ENCODE measurements at regions of chr11 and their contacts with region 1.

Region 1: DNA sequence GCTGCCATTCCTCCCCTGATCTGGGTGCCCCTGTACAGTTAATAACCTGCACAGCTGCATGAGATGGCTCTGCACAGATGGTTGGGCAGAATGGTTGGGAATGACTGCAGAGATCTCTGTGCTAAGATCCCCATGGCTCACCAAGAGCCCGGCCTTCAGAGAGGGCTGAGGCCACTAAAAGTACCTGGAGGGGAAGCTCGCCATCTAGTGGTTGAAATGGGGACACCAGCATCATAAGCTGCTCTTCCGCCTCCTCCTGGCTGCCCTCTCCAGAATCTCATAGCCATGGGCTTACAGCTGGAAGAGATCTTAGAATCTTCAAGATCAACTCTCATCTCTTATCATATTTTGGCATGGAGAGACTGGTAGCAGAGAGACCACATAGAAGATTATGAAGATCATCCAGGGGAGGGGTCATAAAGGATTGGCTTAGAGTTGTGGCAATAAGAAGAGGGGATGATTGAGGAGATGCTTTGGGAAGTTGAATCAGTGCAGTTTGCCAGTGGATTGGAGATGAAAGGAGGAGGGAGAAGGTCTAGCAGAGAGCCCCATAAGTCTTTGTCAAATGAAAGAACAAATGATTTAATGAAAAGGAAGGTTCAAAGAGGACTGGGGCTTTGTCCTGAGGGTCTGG is 22.0 kb upstream of the TLCD5 start:
- DNase-seq: peak; percentile 55
- H3K4me3 ChIP-seq: no peak overlapping the region
- H3K27ac ChIP-seq: no peak overlapping the region
- H3K27me3 ChIP-seq: peaks cover 21% of the 10 kb centered on the region
- CTCF ChIP-seq: peak; percentile 99

Region 2: GRCh38 chr11:120182790-120183491 is 120.2 kb before region 1 on chr11:
- CTCF ChIA-PET with region 1: interaction called, 74 read pairs
- POLR2A ChIA-PET with region 1: no interaction called
- DNase-seq: no peak
- H3K4me3 ChIP-seq: no peak overlapping the region
- H3K27ac ChIP-seq: no peak overlapping the region
- H3K27me3 ChIP-seq: no peaks in the 10 kb centered on the region
- CTCF ChIP-seq: peak; percentile 34

Region 3: DNA sequence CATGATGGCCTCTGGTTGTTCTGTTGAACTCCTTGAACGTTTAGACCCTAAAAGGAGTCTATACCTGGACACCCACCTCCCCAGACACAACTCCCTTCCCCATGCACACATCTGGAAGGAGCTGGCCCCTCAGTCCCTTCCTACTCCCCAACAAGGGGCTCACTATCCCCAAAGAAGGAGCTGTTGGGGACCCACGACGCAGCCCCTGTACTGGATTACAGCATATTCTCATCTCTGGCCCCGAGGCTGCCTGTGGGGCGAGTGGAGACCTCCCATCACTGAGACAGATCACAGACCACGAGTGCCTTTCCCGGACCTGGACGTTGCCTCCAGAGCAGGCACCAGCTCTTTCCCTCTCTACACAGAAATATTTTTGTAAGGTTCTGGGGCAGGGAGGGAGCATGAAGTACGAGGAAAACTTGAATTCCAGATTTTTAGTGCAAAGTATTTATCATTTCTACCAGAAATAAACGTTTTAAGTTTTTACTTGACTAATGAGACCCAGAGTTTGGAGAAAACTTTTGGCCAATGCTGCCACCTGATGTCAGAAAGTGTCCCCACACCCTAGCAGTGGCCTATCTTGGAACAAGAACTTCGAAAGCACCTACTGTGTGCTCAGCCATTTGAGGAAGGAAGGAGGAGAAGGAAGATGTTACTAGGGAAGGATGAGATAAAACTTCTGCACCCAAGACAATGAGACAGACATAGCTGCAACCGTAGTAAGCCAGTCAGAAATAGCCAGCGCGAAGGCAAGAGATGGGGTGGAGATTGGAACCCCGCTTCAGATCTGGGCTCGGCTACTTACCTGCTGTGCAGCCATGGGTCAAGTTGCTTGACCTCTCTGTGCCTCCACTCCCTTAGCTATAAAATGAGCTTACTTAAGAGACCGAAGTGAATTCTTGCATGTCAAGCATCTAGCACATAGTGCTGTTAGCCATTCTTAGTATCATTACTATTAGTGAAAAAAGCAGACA is 73.4 kb before region 1 on chr11:
- CTCF ChIA-PET with region 1: interaction called, 156 read pairs
- POLR2A ChIA-PET with region 1: no interaction called
- DNase-seq: no peak
- H3K4me3 ChIP-seq: no peak overlapping the region
- H3K27ac ChIP-seq: peak overlapping the region; percentile 21
- H3K27me3 ChIP-seq: peaks cover 16% of the 10 kb centered on the region
- CTCF ChIP-seq: peak; percentile 72

Region 4: DNA sequence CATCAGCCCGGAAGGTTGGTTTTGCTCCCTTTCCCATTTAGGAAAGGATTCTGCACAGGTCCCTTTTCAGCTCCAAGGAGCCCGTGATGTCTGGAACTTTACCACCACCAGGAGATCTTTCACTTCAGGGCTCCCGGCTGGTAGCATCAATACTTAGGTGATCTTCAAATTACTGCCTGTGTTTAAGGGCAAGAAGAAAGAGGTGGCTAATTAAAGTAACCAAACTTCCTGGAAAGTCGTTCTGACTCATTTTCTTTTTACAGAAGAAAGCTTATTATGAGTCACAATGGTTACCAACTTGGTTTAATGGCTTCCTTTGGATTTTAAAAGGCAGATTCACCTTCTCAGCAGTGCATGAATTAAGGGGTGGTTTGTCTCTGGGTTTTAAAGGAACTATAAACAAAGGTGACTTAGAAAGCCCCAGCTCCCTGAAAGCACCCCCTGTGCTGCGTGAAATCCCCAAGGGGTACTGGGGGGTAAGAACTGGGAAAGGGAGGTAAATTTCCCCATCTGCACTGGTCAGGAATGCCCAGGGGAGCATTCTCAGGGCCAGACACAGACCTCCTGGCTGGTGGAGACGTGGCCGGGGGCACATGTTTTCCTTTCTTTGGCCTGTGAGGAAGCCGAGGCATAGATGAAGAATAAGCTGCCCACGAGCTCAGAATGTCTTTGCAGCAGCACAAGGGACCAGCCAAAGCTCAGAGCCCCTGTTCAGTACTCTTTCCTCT is 54.4 kb before region 1 on chr11:
- CTCF ChIA-PET with region 1: interaction called, 18 read pairs
- POLR2A ChIA-PET with region 1: no interaction called
- DNase-seq: no peak
- H3K4me3 ChIP-seq: no peak overlapping the region
- H3K27ac ChIP-seq: no peak overlapping the region
- H3K27me3 ChIP-seq: peaks cover 33% of the 10 kb centered on the region
- CTCF ChIP-seq: no peak

Region 5: GRCh38 chr11:120316842-120317688 is 13.9 kb after region 1 on chr11:
- CTCF ChIA-PET with region 1: interaction called, 17 read pairs
- POLR2A ChIA-PET with region 1: no interaction called
- DNase-seq: no peak
- H3K4me3 ChIP-seq: no peak overlapping the region
- H3K27ac ChIP-seq: no peak overlapping the region
- H3K27me3 ChIP-seq: peaks cover 14% of the 10 kb centered on the region
- CTCF ChIP-seq: no peak

Region 6: GRCh38 chr11:120492486-120492885 is 189.4 kb after region 1 on chr11:
- CTCF ChIA-PET with region 1: interaction called, 11 read pairs
- POLR2A ChIA-PET with region 1: no interaction called
- DNase-seq: no peak
- H3K4me3 ChIP-seq: no peak overlapping the region
- H3K27ac ChIP-seq: no peak overlapping the region
- H3K27me3 ChIP-seq: no peaks in the 10 kb centered on the region
- CTCF ChIP-seq: no peak